ENCODE measurements at regions of chr21 and their contacts with region 1.

Region 1: GRCh38 chr21:34888569-34889319 is 160.4 kb downstream of the RUNX1 start:
- DNase-seq: peak; percentile 97
- H3K4me3 ChIP-seq: peak overlapping the region; percentile 58 to 83
- H3K27ac ChIP-seq: peak overlapping the region; percentile 82 to 88
- H3K4me1 ChIP-seq: no peaks in the 10 kb centered on the region
- H3K27me3 ChIP-seq: no peaks in the 10 kb centered on the region
- CTCF ChIP-seq: peak in 2 of 4 experiments; percentile 2 to 50
- POLR2A ChIP-seq: peak; percentile 98

Region 2: DNA sequence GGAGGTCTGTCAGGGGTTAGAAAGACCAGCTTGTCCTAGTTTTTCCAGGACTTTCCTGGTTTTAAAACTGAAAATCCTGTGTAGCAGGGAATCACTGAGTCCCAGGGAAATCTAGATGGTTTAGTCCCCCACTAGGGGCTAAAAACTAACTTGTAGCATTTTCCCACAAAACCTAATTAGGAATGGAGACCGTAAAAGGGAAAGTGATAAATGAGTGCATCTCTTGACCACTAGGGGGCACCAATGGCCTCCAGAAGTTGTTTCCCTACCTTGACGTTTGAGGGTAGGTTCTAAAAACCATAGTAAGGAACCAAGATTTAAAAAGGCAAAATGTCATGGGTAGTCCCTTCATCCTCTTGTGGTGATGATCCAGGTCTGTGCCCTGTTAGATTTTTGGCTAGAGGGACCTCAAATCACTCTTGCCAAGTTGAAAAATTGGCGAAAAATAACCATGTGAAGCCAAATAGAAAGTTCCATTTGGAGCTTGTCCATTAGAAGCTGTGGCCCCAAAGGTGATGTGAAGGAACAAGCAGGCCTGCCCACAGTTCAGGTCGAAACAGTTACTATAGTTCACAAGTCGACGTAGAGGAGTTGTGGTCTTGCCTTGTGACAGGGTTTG is 195.4 kb before region 1 on chr21:
- intact Hi-C with region 1: loop called (anchors 10 kb)
- DNase-seq: peak; percentile 64
- H3K4me3 ChIP-seq: no peak overlapping the region
- H3K27ac ChIP-seq: no peak overlapping the region
- H3K4me1 ChIP-seq: no peaks in the 10 kb centered on the region
- H3K27me3 ChIP-seq: no peaks in the 10 kb centered on the region
- CTCF ChIP-seq: peak; percentile 78 to 91 (median 84)
- POLR2A ChIP-seq: no peak

Region 3: DNA sequence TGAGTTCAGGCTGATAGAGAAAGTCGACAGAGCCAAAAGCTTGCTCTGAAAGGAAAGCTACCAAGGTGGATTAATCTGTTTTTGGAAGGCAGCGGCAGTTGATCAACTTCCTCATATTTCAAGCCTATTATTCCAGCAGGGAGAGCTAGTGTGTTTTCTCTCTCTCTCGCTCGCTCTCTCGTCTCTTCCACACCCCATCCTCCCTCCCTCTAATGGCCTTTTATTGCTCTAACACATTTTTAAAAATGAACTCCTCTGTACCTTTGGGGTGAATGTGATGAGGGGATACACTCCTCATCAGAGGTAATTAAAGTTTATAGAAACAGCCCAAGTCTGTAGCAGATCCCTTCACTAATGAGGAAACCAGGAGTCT is 93.6 kb before region 1 on chr21:
- intact Hi-C with region 1: loop called (anchors 5 kb)
- DNase-seq: peak; percentile 74
- H3K4me3 ChIP-seq: no peak overlapping the region
- H3K27ac ChIP-seq: peak overlapping the region; percentile 75 to 78
- H3K4me1 ChIP-seq: no peaks in the 10 kb centered on the region
- H3K27me3 ChIP-seq: no peaks in the 10 kb centered on the region
- CTCF ChIP-seq: peak in 2 of 4 experiments; percentile 19 to 34
- POLR2A ChIP-seq: no peak

Region 4: DNA sequence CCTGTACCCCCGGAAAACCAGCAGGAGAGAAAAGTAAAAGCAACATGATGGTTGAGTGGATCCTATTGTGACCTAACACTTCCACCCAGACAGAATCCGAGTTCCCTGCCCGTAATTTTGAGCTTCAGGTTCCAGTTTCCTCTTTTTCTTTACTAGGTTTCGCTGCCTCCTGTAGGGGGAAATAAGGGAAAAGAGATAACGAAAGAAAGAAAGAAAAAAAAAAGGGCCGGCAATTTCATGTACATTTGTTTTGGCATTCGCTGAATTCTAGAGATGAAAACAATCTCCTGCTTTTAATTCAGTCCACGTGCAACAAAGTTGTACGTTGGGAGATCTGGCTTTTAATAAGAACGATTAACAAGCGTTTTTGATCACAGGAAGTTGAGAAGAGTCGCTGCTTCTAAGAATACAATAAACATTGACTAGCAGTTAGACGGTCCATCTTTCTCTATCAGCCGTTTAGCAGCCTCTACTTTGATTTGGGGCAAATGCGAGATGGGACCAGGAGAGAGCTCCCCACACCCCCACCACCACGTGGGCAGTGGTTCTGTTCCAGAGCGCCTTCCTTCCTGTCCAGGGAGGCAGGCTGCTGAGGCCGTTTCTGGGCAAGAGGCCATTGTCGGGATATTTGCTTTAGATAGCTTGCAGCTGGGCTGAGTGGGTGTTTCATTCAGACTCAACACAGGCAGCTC is 316.3 kb after region 1 on chr21:
- intact Hi-C with region 1: loop called (anchors 5 kb)
- DNase-seq: peak; percentile 21
- H3K4me3 ChIP-seq: no peak overlapping the region
- H3K27ac ChIP-seq: peak overlapping the region; percentile 29 to 59
- H3K4me1 ChIP-seq: no peaks in the 10 kb centered on the region
- H3K27me3 ChIP-seq: no peaks in the 10 kb centered on the region
- CTCF ChIP-seq: no peak
- POLR2A ChIP-seq: no peak

Region 5: DNA sequence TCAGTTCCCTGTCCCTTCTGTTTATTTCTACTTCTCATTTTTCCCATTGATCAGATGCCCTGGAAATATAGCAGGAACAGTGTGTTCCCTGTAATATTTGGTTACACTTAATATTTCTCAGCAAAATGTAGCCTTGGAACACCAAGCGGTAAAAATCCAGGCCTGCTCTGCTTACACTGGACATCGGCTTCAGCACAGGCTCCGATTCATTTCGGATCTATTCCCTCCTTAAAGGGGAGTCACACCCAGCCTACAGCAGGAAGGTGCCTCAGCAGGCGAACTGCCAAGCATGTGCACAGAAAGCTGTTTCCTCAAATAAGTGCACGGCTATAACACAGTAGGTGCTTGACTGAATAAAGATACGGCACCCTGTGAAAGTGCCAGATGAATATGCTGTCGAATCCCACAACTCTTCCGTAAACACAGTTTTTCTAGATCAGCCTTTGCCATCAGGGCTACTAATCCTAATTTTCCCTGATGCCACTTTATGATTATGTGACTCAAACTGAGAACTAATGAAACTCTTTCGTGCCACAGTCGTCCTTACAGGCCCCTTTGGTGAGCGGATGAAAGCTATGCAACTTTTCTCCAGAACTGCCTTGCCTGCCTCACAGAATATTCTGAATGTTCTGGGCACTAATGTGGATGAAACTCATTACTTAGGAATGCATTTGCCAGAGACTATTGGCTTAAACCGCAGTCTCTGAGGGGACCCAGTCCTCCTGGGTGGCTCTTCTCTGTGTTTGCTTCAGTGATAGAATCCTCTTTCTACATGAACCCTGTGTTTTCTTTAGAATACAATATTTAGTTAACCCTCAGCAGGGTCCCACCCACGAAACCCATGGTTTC is 435.9 kb after region 1 on chr21:
- intact Hi-C with region 1: loop called (anchors 5 kb)
- DNase-seq: peak; percentile 28
- H3K4me3 ChIP-seq: no peak overlapping the region
- H3K27ac ChIP-seq: peak overlapping the region; percentile 51 to 74
- H3K4me1 ChIP-seq: peaks cover 18% of the 10 kb centered on the region
- H3K27me3 ChIP-seq: no peaks in the 10 kb centered on the region
- CTCF ChIP-seq: no peak
- POLR2A ChIP-seq: no peak

Region 6: GRCh38 chr21:36028127-36029069 is 1139.7 kb after region 1 on chr21:
- intact Hi-C with region 1: loop called (anchors 5 kb)
- DNase-seq: peak; percentile 71
- H3K4me3 ChIP-seq: no peak overlapping the region
- H3K27ac ChIP-seq: no peak overlapping the region
- H3K4me1 ChIP-seq: no peaks in the 10 kb centered on the region
- H3K27me3 ChIP-seq: no peaks in the 10 kb centered on the region
- CTCF ChIP-seq: peak; percentile 85 to 94 (median 94)
- POLR2A ChIP-seq: no peak